CD4-positive, alpha-beta memory T cell (primary cell): ENCODE measurements at regions of chr3 and their contacts with region 1.

Region 1: GRCh38 chr3:195106418-195106906 is 164.5 kb downstream of the XXYLT1 start:
- DNase-seq: peak; percentile 53 to 72 (median 61)
- H3K4me3 ChIP-seq: no peak overlapping the region
- H3K4me3 Mint-ChIP-seq: peak overlapping the region in 6 of 8 donors; percentile 3 to 73 (median 46)
- H3K27ac ChIP-seq: no peak overlapping the region
- H3K27ac Mint-ChIP-seq: peak overlapping the region in 2 of 7 donors; percentile 57 to 59
- H3K4me1 ChIP-seq: peaks cover 8% of the 10 kb centered on the region
- H3K4me1 Mint-ChIP-seq: peaks cover 0 to 6% (median 2%) of the 10 kb centered on the region in 4 donors
- H3K27me3 ChIP-seq: no peaks in the 10 kb centered on the region
- H3K27me3 Mint-ChIP-seq: no peaks in the 10 kb centered on the region

Region 2: GRCh38 chr3:194671900-194672808 is 434.3 kb before region 1 on chr3 and contains the start of gene LSG1:
- CTCF ChIA-PET with region 1: interaction called, 59 read pairs
- POLR2A ChIA-PET with region 1: interaction called, 3 read pairs
- intact Hi-C with region 1: loop called (anchors 1 kb)
- DNase-seq: peak; percentile 87 to 90 (median 89)
- H3K4me3 ChIP-seq: peak within 1 kb of the TSS; percentile 85 to 88
- H3K4me3 Mint-ChIP-seq: peak within 1 kb of the TSS; percentile 97 to 100 (median 99)
- H3K27ac ChIP-seq: peak within 1 kb of the TSS; percentile 95
- H3K27ac Mint-ChIP-seq: peak within 1 kb of the TSS; percentile 98 to 99 (median 99)
- H3K4me1 ChIP-seq: peaks cover 32% of the 10 kb centered on the region
- H3K4me1 Mint-ChIP-seq: peaks cover 26 to 52% (median 38%) of the 10 kb centered on the region in 4 donors
- H3K27me3 ChIP-seq: no peaks in the 10 kb centered on the region
- H3K27me3 Mint-ChIP-seq: peaks cover 0 to 4% of the 10 kb centered on the region in 2 donors
- total RNA-seq, gene LSG1: 48.4 to 49.5 TPM

Region 3: GRCh38 chr3:195001961-195002861 is 104.3 kb before region 1 on chr3:
- CTCF ChIA-PET with region 1: interaction called, 9 read pairs
- POLR2A ChIA-PET with region 1: no interaction called
- intact Hi-C with region 1: loop called (anchors 1 kb)
- DNase-seq: peak in 1 of 5 donors; percentile 4
- H3K4me3 ChIP-seq: no peak overlapping the region
- H3K4me3 Mint-ChIP-seq: no peak overlapping the region
- H3K27ac ChIP-seq: no peak overlapping the region
- H3K27ac Mint-ChIP-seq: no peak overlapping the region
- H3K4me1 ChIP-seq: no peaks in the 10 kb centered on the region
- H3K4me1 Mint-ChIP-seq: no peaks in the 10 kb centered on the region
- H3K27me3 ChIP-seq: no peaks in the 10 kb centered on the region
- H3K27me3 Mint-ChIP-seq: peaks cover 11 to 17% of the 10 kb centered on the region in 2 donors

Region 4: DNA sequence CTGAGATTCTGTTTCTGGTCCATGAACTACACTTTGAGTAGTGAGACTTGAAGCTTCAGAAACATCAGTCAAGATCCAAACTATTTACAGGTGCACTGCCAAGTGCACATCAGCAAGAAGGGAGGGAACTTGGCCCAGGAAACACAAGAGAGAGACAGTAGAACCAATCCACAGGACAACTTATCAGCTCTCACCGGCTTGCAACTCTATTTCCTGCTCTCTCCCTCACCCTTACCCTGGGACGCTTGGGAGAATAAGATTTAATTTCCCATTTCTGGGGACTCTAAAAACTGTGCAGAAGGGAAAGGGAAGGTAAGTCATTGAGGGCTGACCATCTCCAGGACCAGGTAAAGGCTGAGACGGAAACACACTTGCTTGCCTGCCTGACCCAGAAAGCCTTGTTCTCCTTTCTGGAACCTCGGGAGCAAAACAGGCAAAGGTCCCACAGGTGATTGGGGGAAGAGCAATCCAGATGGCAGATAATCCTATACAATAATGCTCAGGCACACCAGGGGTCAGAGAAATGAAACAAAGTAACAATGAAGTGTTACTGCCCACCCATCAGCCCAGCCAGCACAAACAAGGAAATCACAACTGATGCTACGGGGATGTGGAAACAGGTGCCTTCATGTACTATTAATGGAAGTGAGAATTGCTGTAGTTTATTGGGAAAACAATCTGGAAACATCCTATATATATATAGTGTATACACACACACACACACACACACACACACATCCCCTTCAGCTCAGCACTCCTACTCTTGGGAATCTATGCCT is 10.1 kb after region 1 on chr3:
- CTCF ChIA-PET with region 1: interaction called, 13 read pairs
- POLR2A ChIA-PET with region 1: no interaction called
- intact Hi-C with region 1: no loop called
- DNase-seq: no peak
- H3K4me3 ChIP-seq: no peak overlapping the region
- H3K4me3 Mint-ChIP-seq: no peak overlapping the region
- H3K27ac ChIP-seq: no peak overlapping the region
- H3K27ac Mint-ChIP-seq: no peak overlapping the region
- H3K4me1 ChIP-seq: no peaks in the 10 kb centered on the region
- H3K4me1 Mint-ChIP-seq: peaks cover 0 to 6% (median 0%) of the 10 kb centered on the region in 4 donors
- H3K27me3 ChIP-seq: no peaks in the 10 kb centered on the region
- H3K27me3 Mint-ChIP-seq: no peaks in the 10 kb centered on the region